Right ventricle myocardium inferior (tissue), 1 donor: ENCODE measurements at regions of chr2 and their contacts with region 1.

Region 1: GRCh38 chr2:109318150-109318948 is 189.3 kb downstream of the SH3RF3 start:
- DNase-seq: peak; percentile 90
- ATAC-seq: peak; percentile 79

Region 2: GRCh38 chr2:109247812-109248211 is 70.5 kb before region 1 on chr2:
- intact Hi-C with region 1: loop called (anchors 5 kb)
- DNase-seq: no peak
- ATAC-seq: peak; percentile 59

Region 3: GRCh38 chr2:109284826-109285225 is 33.5 kb before region 1 on chr2:
- intact Hi-C with region 1: loop called (anchors 5 kb)
- DNase-seq: peak; percentile 81
- ATAC-seq: peak; percentile 87

Region 4: DNA sequence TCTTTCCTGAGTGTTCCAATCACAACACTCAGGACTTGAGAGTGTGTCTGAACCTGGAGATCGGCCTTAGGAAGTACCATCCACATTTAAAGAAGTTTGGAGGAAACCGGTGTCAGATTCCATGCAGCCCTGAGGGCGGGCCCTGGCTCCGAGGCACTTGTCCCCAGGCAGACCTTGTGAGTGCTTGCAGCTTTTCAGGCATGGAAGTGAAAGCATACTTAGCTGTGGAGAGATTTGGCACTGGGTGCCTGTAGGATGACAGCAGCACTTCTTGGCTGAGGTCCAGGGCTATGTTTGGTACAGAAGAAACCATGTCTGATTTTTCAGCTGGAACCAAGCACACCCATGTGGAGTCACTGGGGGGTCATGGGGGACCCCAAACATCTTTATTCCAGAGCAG is 64.6 kb after region 1 on chr2:
- intact Hi-C with region 1: loop called (anchors 5 kb)
- DNase-seq: peak; percentile 77
- ATAC-seq: peak; percentile 92

Region 5: GRCh38 chr2:109409321-109410038 is 91.1 kb after region 1 on chr2:
- intact Hi-C with region 1: no loop called
- DNase-seq: no peak
- ATAC-seq: no peak